B cell (primary cell): ENCODE measurements at regions of chr2 and their contacts with region 1.

Region 1: GRCh38 chr2:163191372-163191771 is 352.8 kb upstream of the KCNH7 start:
- DNase-seq: peak; percentile 20
- ATAC-seq: no peak
- H3K4me3 ChIP-seq: no peak overlapping the region
- H3K4me3 Mint-ChIP-seq: no peak overlapping the region
- H3K27ac ChIP-seq: no peak overlapping the region
- H3K27ac Mint-ChIP-seq: no peak overlapping the region
- H3K4me1 ChIP-seq: no peaks in the 10 kb centered on the region
- H3K4me1 Mint-ChIP-seq: no peaks in the 10 kb centered on the region
- H3K27me3 ChIP-seq: no peaks in the 10 kb centered on the region
- H3K27me3 Mint-ChIP-seq: no peaks in the 10 kb centered on the region
- CTCF ChIP-seq: peak; percentile 62

Region 2: DNA sequence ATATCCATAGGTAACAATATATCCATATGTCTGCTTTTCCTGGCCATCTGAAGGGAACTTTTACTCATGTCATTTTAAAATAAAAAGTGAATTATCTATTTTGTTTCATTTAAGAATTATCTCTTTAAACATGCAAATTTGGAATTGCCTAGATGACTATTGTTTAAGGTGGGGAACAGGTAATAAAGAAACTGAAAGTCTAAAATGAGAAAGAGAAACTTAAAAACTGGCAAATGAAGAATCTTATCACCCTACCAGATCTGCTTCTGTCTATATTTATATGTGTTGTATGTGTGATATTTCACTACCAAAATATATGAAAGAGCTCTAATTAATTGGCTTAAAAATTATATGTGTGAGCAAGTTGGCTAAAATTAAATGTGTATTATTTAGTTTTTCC is 109.6 kb before region 1 on chr2:
- CTCF ChIA-PET with region 1: no interaction called
- POLR2A ChIA-PET with region 1: no interaction called
- intact Hi-C with region 1: no loop called
- DNase-seq: no peak
- ATAC-seq: no peak
- H3K4me3 ChIP-seq: no peak overlapping the region
- H3K4me3 Mint-ChIP-seq: no peak overlapping the region
- H3K27ac ChIP-seq: no peak overlapping the region
- H3K27ac Mint-ChIP-seq: no peak overlapping the region
- H3K4me1 ChIP-seq: no peaks in the 10 kb centered on the region
- H3K4me1 Mint-ChIP-seq: no peaks in the 10 kb centered on the region
- H3K27me3 ChIP-seq: no peaks in the 10 kb centered on the region
- H3K27me3 Mint-ChIP-seq: no peaks in the 10 kb centered on the region
- CTCF ChIP-seq: no peak

Region 3: DNA sequence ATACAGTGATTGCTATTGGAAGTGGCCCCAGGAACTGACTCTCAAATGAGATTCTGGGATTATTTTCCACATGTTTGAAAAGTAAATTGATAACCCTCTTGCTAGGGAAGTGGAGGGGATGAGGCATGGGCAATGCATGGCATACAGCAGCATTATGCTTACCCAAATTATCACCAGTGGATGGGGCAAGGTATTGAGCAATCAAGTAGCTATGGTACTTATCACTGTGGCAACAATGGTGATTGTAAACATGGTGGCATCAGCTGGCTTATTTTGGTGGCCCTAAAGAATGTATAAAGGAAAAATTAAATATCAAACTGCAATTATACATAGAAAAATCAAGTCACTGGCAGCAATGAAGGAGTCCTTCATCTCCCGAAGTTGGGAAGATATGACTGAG is 389.4 kb after region 1 on chr2:
- CTCF ChIA-PET with region 1: no interaction called
- POLR2A ChIA-PET with region 1: no interaction called
- intact Hi-C with region 1: no loop called
- DNase-seq: no peak
- ATAC-seq: no peak
- H3K4me3 ChIP-seq: no peak overlapping the region
- H3K4me3 Mint-ChIP-seq: no peak overlapping the region
- H3K27ac ChIP-seq: no peak overlapping the region
- H3K27ac Mint-ChIP-seq: no peak overlapping the region
- H3K4me1 ChIP-seq: no peaks in the 10 kb centered on the region
- H3K4me1 Mint-ChIP-seq: no peaks in the 10 kb centered on the region
- H3K27me3 ChIP-seq: no peaks in the 10 kb centered on the region
- H3K27me3 Mint-ChIP-seq: no peaks in the 10 kb centered on the region
- CTCF ChIP-seq: no peak

Region 4: DNA sequence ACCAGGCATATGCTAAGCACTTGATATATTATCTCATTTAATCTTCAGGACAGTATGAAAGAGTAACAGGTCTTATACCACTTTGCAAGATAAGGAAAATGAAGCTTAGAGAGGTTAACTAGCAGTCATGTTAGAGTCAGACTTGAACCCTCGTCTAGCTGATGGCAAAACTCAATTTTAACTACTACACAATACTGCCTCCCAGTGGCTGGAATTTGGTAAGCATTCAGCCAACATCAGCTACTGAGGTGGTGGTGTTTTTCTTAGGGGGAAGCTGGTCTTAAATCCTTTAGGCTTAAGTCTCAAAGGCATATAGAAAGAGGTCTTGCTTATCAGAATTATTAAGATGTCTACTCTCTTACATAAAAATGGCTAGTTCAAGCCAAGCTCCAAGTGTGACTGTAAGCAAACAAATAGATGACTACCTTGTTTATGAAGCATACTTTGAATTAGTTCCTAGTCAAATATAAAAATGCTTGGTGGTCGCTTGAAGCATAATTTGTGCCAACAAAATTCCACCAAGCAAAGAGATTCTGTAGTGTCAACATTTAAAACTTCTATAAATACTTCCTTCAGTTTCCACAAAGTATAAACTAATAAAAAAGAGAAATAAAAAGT is 869.9 kb after region 1 on chr2:
- CTCF ChIA-PET with region 1: no interaction called
- POLR2A ChIA-PET with region 1: no interaction called
- intact Hi-C with region 1: loop called (anchors 10 kb)
- DNase-seq: peak; percentile 18
- ATAC-seq: no peak
- H3K4me3 ChIP-seq: no peak overlapping the region
- H3K4me3 Mint-ChIP-seq: no peak overlapping the region
- H3K27ac ChIP-seq: no peak overlapping the region
- H3K27ac Mint-ChIP-seq: no peak overlapping the region
- H3K4me1 ChIP-seq: no peaks in the 10 kb centered on the region
- H3K4me1 Mint-ChIP-seq: no peaks in the 10 kb centered on the region
- H3K27me3 ChIP-seq: no peaks in the 10 kb centered on the region
- H3K27me3 Mint-ChIP-seq: no peaks in the 10 kb centered on the region
- CTCF ChIP-seq: no peak